CD4-positive, alpha-beta memory T cell (primary cell): ENCODE measurements at regions of chr6 and their contacts with region 1.

Region 1: GRCh38 chr6:28895134-28895812 is 28.5 kb downstream of the TRIM27 start:
- DNase-seq: peak; percentile 90 to 94 (median 93)
- H3K4me3 ChIP-seq: peak overlapping the region; percentile 90 to 97
- H3K4me3 Mint-ChIP-seq: peak overlapping the region; percentile 94 to 99 (median 98)
- H3K27ac ChIP-seq: peak overlapping the region; percentile 96
- H3K27ac Mint-ChIP-seq: peak overlapping the region; percentile 97 to 100 (median 100)
- H3K4me1 ChIP-seq: peaks cover 17% of the 10 kb centered on the region
- H3K4me1 Mint-ChIP-seq: peaks cover 4 to 24% (median 18%) of the 10 kb centered on the region in 4 donors
- H3K27me3 ChIP-seq: no peaks in the 10 kb centered on the region
- H3K27me3 Mint-ChIP-seq: peaks cover 2 to 6% of the 10 kb centered on the region in 2 donors

Region 2: GRCh38 chr6:27864906-27865849 is 1030.1 kb before region 1 on chr6:
- CTCF ChIA-PET with region 1: no interaction called
- POLR2A ChIA-PET with region 1: no interaction called
- intact Hi-C with region 1: loop called (anchors 1 kb)
- DNase-seq: peak; percentile 86 to 93 (median 91)
- H3K4me3 ChIP-seq: peak overlapping the region; percentile 33 to 69
- H3K4me3 Mint-ChIP-seq: peak overlapping the region; percentile 96 to 99 (median 99)
- H3K27ac ChIP-seq: peak overlapping the region; percentile 62
- H3K27ac Mint-ChIP-seq: peak overlapping the region; percentile 94 to 99 (median 98)
- H3K4me1 ChIP-seq: peaks cover 31% of the 10 kb centered on the region
- H3K4me1 Mint-ChIP-seq: peaks cover 18 to 46% (median 34%) of the 10 kb centered on the region in 4 donors
- H3K27me3 ChIP-seq: no peaks in the 10 kb centered on the region
- H3K27me3 Mint-ChIP-seq: no peaks in the 10 kb centered on the region

Region 3: DNA sequence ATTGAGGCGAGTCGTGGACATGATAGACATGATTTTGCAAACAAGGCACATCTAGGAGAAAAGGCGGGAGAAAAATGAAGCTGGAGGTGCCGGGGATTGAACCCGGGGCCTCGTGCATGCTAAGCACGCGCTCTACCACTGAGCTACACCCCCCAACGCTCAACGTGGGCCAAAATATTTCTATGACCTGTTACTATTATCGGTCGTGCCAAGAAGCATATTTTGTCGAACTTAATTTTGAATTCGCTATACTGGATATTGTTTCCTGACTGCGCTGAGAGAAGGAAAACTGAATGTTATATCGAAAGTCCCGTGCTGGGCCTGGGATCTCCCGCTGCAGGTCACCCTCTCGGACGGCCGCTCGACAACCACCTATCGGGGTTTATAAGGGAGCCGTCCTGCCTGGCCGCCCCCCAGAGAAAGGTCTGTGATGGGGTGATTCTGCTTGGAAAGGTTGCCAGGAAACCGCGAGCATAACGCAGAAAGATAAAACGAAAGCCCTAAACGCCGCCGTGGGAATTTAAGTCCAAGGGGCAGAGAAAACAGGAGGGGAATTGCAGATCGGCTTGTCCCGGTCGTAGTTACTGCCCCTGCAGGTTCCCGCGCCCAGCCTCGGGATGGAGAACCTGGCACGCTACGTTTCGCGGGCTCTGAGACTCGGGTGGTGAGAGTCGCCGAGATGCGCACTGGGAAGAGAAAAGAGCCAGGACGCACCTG is 31.5 kb before region 1 on chr6:
- CTCF ChIA-PET with region 1: interaction called, 16 read pairs
- POLR2A ChIA-PET with region 1: interaction called, 208 read pairs
- intact Hi-C with region 1: loop called (anchors 1 kb)
- DNase-seq: peak; percentile 88 to 91 (median 89)
- H3K4me3 ChIP-seq: peak overlapping the region; percentile 53 to 85
- H3K4me3 Mint-ChIP-seq: peak overlapping the region; percentile 92 to 97 (median 94)
- H3K27ac ChIP-seq: peak overlapping the region; percentile 45
- H3K27ac Mint-ChIP-seq: peak overlapping the region; percentile 79 to 99 (median 97)
- H3K4me1 ChIP-seq: peaks cover 14% of the 10 kb centered on the region
- H3K4me1 Mint-ChIP-seq: peaks cover 21 to 64% (median 43%) of the 10 kb centered on the region in 4 donors
- H3K27me3 ChIP-seq: no peaks in the 10 kb centered on the region
- H3K27me3 Mint-ChIP-seq: peaks cover 4 to 5% of the 10 kb centered on the region in 2 donors

Region 4: GRCh38 chr6:28880894-28881780 is 14.1 kb before region 1 on chr6:
- CTCF ChIA-PET with region 1: interaction called, 21 read pairs
- POLR2A ChIA-PET with region 1: interaction called, 164 read pairs
- intact Hi-C with region 1: loop called (anchors 1 kb)
- DNase-seq: peak in 4 of 5 donors; percentile 21 to 46 (median 37)
- H3K4me3 ChIP-seq: no peak overlapping the region
- H3K4me3 Mint-ChIP-seq: peak overlapping the region; percentile 62 to 83 (median 76)
- H3K27ac ChIP-seq: no peak overlapping the region
- H3K27ac Mint-ChIP-seq: peak overlapping the region in 6 of 7 donors; percentile 18 to 94 (median 78)
- H3K4me1 ChIP-seq: peaks cover 24% of the 10 kb centered on the region
- H3K4me1 Mint-ChIP-seq: peaks cover 30 to 39% (median 35%) of the 10 kb centered on the region in 4 donors
- H3K27me3 ChIP-seq: no peaks in the 10 kb centered on the region
- H3K27me3 Mint-ChIP-seq: peaks cover 12 to 23% of the 10 kb centered on the region in 2 donors

Region 5: DNA sequence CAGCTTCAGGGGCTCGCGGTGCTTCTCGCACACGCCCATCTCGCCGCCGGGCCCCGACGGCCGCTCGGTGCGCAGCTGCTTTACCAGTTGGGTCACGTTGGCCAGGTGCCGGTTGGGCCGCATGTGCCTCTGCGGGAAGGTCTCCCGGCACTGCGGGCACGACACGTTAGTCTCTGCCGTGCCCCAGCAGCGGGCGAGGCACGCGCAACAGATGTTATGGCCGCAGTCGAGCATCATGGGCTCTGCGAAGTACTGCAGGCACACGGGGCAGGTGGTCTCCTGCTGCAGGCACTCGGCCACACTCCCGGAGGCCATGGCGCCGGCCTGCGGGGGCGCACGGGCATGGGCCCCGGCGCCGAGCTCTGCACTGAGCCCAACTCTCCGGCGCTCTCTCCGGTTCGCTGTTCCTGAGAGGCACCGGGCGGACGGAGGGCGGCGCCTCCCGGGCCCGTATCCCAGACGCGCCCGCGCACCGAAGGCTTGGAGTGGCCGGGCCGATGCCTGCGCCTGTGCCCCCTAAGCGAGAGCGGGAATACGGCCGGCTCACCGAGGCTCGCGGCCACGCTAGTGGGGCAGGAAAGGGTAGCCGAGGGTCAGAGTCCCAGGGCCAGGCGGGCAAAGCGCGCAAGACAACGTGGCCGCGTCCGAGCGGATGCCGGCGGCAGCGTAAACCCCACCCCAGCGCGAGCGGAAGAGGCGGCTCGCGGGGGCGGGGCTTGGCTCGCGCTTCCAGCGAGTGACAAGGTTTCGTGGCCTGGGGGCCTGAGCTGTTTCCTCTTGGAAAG is 28.2 kb after region 1 on chr6 and contains the start of gene TRIM27:
- CTCF ChIA-PET with region 1: interaction called, 16 read pairs
- POLR2A ChIA-PET with region 1: interaction called, 111 read pairs
- intact Hi-C with region 1: loop called (anchors 1 kb)
- DNase-seq: peak; percentile 76 to 84 (median 78)
- H3K4me3 ChIP-seq: peak within 1 kb of the TSS; percentile 82 to 91
- H3K4me3 Mint-ChIP-seq: peak within 1 kb of the TSS; percentile 92 to 98 (median 95)
- H3K27ac ChIP-seq: peak within 1 kb of the TSS; percentile 82
- H3K27ac Mint-ChIP-seq: peak within 1 kb of the TSS; percentile 86 to 96 (median 94)
- H3K4me1 ChIP-seq: peaks cover 46% of the 10 kb centered on the region
- H3K4me1 Mint-ChIP-seq: peaks cover 30 to 49% (median 41%) of the 10 kb centered on the region in 4 donors
- H3K27me3 ChIP-seq: no peaks in the 10 kb centered on the region
- H3K27me3 Mint-ChIP-seq: peaks cover 0 to 2% of the 10 kb centered on the region in 2 donors
- total RNA-seq, gene TRIM27: 102 to 108 TPM

Region 6: GRCh38 chr6:28981833-28982475 is 86.7 kb after region 1 on chr6:
- CTCF ChIA-PET with region 1: no interaction called
- POLR2A ChIA-PET with region 1: interaction called, 4 read pairs
- intact Hi-C with region 1: loop called (anchors 1 kb)
- DNase-seq: peak; percentile 79 to 87 (median 84)
- H3K4me3 ChIP-seq: peak overlapping the region; percentile 99
- H3K4me3 Mint-ChIP-seq: peak overlapping the region; percentile 87 to 95 (median 94)
- H3K27ac ChIP-seq: no peak overlapping the region
- H3K27ac Mint-ChIP-seq: peak overlapping the region; percentile 84 to 100 (median 95)
- H3K4me1 ChIP-seq: peaks cover 28% of the 10 kb centered on the region
- H3K4me1 Mint-ChIP-seq: peaks cover 37 to 65% (median 46%) of the 10 kb centered on the region in 4 donors
- H3K27me3 ChIP-seq: no peaks in the 10 kb centered on the region
- H3K27me3 Mint-ChIP-seq: peaks cover 14 to 24% of the 10 kb centered on the region in 2 donors

Region 7: GRCh38 chr6:29016559-29017427 is 121.5 kb after region 1 on chr6:
- CTCF ChIA-PET with region 1: interaction called, 3 read pairs
- POLR2A ChIA-PET with region 1: interaction called, 4 read pairs
- intact Hi-C with region 1: loop called (anchors 1 kb)
- DNase-seq: peak; percentile 79 to 82 (median 81)
- H3K4me3 ChIP-seq: peak overlapping the region; percentile 55 to 58
- H3K4me3 Mint-ChIP-seq: peak overlapping the region; percentile 85 to 97 (median 90)
- H3K27ac ChIP-seq: peak overlapping the region; percentile 9
- H3K27ac Mint-ChIP-seq: peak overlapping the region; percentile 70 to 92 (median 82)
- H3K4me1 ChIP-seq: peaks cover 10% of the 10 kb centered on the region
- H3K4me1 Mint-ChIP-seq: peaks cover 10 to 21% (median 15%) of the 10 kb centered on the region in 4 donors
- H3K27me3 ChIP-seq: no peaks in the 10 kb centered on the region
- H3K27me3 Mint-ChIP-seq: peaks cover 7 to 11% of the 10 kb centered on the region in 2 donors